Activated CD4-positive, alpha-beta T cell treated with anti-CD3 and anti-CD28 coated beads, Interleukin-2, amount 10 ng/mL, durations not matched to agents 7 days and 5 days (primary cell): ENCODE measurements at regions of chr1 and their contacts with region 1.

Region 1: GRCh38 chr1:226211181-226211821 is 12.2 kb upstream of the MIXL1 start:
- DNase-seq: no peak
- H3K4me3 Mint-ChIP-seq: no peak overlapping the region
- H3K27ac Mint-ChIP-seq: no peak overlapping the region
- H3K4me1 Mint-ChIP-seq: no peaks in the 10 kb centered on the region
- H3K27me3 Mint-ChIP-seq: no peaks in the 10 kb centered on the region

Region 2: DNA sequence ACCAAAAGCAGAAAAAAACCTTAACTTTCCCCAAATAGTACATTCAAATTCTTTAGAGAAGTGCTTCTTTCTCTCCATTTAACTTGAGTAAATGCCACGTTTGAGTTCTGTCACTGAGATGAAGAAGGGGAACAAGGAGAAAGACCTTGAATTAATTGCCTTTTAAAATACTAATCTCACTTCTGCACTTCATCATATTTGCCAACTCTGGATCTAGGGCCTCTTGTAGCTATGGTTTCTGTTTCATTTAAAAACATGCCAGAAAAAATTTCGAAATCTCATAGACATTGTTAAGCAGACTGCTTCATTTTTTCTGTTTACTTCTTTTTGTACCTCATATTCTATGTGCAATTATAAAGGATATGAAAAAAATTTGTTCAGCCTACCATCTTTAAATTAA is 36.8 kb after region 1 on chr1:
- CTCF ChIA-PET with region 1: interaction called, 10 read pairs
- POLR2A ChIA-PET with region 1: no interaction called
- DNase-seq: no peak
- H3K4me3 Mint-ChIP-seq: no peak overlapping the region
- H3K27ac Mint-ChIP-seq: no peak overlapping the region
- H3K4me1 Mint-ChIP-seq: no peaks in the 10 kb centered on the region
- H3K27me3 Mint-ChIP-seq: no peaks in the 10 kb centered on the region

Region 3: GRCh38 chr1:226466296-226466695 is 255.0 kb after region 1 on chr1:
- CTCF ChIA-PET with region 1: no interaction called
- POLR2A ChIA-PET with region 1: no interaction called
- DNase-seq: no peak
- H3K4me3 Mint-ChIP-seq: no peak overlapping the region
- H3K27ac Mint-ChIP-seq: no peak overlapping the region
- H3K4me1 Mint-ChIP-seq: no peaks in the 10 kb centered on the region
- H3K27me3 Mint-ChIP-seq: peaks cover 18% of the 10 kb centered on the region